Naive thymus-derived CD4-positive, alpha-beta T cell (primary cell): ENCODE measurements at regions of chr4 and their contacts with region 1.

Region 1: GRCh38 chr4:38509551-38509950 is 154.4 kb upstream of the KLF3 start:
- DNase-seq: peak in 8 of 9 donors; percentile 30 to 83 (median 76)
- ATAC-seq: peak; percentile 94
- H3K4me3 ChIP-seq: peak overlapping the region; percentile 61
- H3K4me3 Mint-ChIP-seq: peak overlapping the region; percentile 70 to 94 (median 89)
- H3K27ac ChIP-seq: peak overlapping the region; percentile 74
- H3K27ac Mint-ChIP-seq: peak overlapping the region; percentile 71 to 97 (median 89)
- H3K4me1 ChIP-seq: peaks cover 60 to 64% of the 10 kb centered on the region in 2 donors
- H3K4me1 Mint-ChIP-seq: peaks cover 40 to 94% (median 90%) of the 10 kb centered on the region in 7 donors
- H3K27me3 ChIP-seq: no peaks in the 10 kb centered on the region
- H3K27me3 Mint-ChIP-seq: peaks cover 0 to 51% (median 0%) of the 10 kb centered on the region in 5 donors

Region 2: DNA sequence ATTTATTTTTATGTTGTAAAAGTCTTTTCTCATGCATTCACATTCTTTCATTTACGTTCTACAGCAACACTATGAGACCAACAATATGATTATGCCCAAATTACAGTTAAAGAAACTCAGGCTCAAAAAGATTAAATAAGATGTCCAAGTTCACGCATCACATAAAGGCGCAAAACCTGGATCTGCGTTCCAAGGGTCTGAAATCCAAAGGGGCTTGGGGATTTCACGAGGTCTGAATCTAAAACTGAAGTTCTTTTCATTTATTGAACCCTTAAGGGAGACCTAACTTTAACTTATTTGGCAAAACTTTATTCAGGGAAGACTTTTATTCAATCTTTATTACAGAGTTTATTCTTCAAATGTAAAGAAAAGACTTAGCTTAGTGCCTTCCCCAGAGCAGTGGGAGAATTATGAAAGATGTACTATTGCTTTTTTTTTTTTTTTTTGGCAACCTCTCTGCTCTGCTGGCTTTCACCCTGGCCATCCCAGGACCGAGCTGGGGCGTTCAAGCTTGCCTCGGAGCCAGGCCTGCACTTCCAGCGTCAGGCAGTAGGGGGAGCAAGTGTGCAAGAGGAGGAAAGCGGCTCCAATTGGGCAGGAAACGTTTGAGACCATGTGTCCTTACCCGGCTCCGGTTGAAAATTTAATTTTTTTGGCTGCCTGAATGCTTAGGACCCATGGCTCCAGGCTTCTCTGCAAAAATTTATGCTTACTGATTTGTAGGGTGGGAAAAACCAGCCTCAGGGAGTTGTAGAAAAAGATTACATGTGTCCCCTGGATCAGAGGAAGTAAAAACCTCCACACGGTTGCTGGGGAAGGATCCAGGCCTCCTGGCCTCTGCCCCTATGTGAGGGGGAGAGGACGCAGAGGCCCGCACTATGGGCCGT is 189.9 kb before region 1 on chr4:
- CTCF ChIA-PET with region 1: interaction called, 15 read pairs
- POLR2A ChIA-PET with region 1: interaction called, 12 read pairs
- intact Hi-C with region 1: loop called (anchors 1 to 5 kb)
- DNase-seq: peak; percentile 73 to 96 (median 83)
- ATAC-seq: peak; percentile 91
- H3K4me3 ChIP-seq: peak overlapping the region; percentile 38
- H3K4me3 Mint-ChIP-seq: peak overlapping the region; percentile 80 to 95 (median 88)
- H3K27ac ChIP-seq: peak overlapping the region; percentile 68
- H3K27ac Mint-ChIP-seq: peak overlapping the region; percentile 87 to 98 (median 94)
- H3K4me1 ChIP-seq: peaks cover 19 to 35% of the 10 kb centered on the region in 2 donors
- H3K4me1 Mint-ChIP-seq: peaks cover 33 to 75% (median 70%) of the 10 kb centered on the region in 7 donors
- H3K27me3 ChIP-seq: no peaks in the 10 kb centered on the region
- H3K27me3 Mint-ChIP-seq: peaks cover 0 to 10% (median 0%) of the 10 kb centered on the region in 5 donors

Region 3: DNA sequence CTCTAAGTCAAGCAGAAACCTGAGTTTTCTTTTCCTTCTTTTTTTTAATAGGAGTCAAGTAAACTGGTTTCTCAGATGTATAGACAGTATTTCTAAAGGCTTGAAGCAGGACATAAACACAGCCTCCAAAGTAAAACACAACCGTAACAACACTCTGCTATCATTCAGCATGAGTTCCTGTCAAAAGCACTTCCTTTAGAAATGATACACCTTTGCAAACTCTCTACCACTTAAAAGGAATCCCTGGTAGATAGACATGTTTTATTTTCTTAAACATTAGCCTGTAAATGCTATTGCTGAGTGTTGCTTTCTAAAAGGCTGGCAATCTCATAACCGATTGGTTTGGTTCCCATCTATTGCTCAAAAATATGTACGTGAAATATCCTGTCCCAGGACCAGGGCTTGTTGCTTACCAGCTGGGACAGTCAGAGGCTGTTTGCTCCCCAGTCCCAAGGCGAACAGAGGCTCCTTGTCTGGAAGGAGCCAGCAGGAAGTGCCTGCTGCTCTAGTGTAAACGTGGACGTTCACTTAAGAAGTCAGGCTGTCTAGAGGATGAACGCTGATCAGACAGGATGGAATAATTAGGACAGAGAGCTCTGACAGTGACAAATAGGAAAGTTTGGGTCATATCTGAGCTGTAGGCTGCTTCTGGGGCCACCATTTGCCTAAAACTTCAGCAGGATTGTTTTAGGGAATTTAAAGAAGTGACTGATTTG is 19.5 kb before region 1 on chr4:
- CTCF ChIA-PET with region 1: interaction called, 3 read pairs
- POLR2A ChIA-PET with region 1: interaction called, 8 read pairs
- intact Hi-C with region 1: loop called in 1 of 2 experiments (anchors 1 kb)
- DNase-seq: peak in 6 of 9 donors; percentile 26 to 63 (median 43)
- ATAC-seq: peak; percentile 67
- H3K4me3 ChIP-seq: peak overlapping the region; percentile 25
- H3K4me3 Mint-ChIP-seq: peak overlapping the region; percentile 48 to 85 (median 77)
- H3K27ac ChIP-seq: peak overlapping the region; percentile 60
- H3K27ac Mint-ChIP-seq: peak overlapping the region; percentile 80 to 100 (median 93)
- H3K4me1 ChIP-seq: peaks cover 28 to 30% of the 10 kb centered on the region in 2 donors
- H3K4me1 Mint-ChIP-seq: peaks cover 17 to 67% (median 43%) of the 10 kb centered on the region in 7 donors
- H3K27me3 ChIP-seq: no peaks in the 10 kb centered on the region
- H3K27me3 Mint-ChIP-seq: peaks cover 0 to 8% (median 0%) of the 10 kb centered on the region in 5 donors

Region 4: GRCh38 chr4:38529189-38530115 is 19.9 kb after region 1 on chr4:
- CTCF ChIA-PET with region 1: no interaction called
- POLR2A ChIA-PET with region 1: interaction called, 3 read pairs
- intact Hi-C with region 1: loop called (anchors 1 to 2 kb)
- DNase-seq: peak in 8 of 9 donors; percentile 25 to 57 (median 34)
- ATAC-seq: peak; percentile 88
- H3K4me3 ChIP-seq: no peak overlapping the region
- H3K4me3 Mint-ChIP-seq: peak overlapping the region; percentile 22 to 80 (median 58)
- H3K27ac ChIP-seq: peak overlapping the region; percentile 30
- H3K27ac Mint-ChIP-seq: peak overlapping the region; percentile 80 to 96 (median 90)
- H3K4me1 ChIP-seq: peaks cover 18 to 22% of the 10 kb centered on the region in 2 donors
- H3K4me1 Mint-ChIP-seq: peaks cover 21 to 43% (median 35%) of the 10 kb centered on the region in 7 donors
- H3K27me3 ChIP-seq: no peaks in the 10 kb centered on the region
- H3K27me3 Mint-ChIP-seq: peaks cover 0 to 34% (median 0%) of the 10 kb centered on the region in 5 donors